Right ventricle myocardium inferior (tissue), 1 donor: ENCODE measurements at regions of chr2 and their contacts with region 1.

Region 1: DNA sequence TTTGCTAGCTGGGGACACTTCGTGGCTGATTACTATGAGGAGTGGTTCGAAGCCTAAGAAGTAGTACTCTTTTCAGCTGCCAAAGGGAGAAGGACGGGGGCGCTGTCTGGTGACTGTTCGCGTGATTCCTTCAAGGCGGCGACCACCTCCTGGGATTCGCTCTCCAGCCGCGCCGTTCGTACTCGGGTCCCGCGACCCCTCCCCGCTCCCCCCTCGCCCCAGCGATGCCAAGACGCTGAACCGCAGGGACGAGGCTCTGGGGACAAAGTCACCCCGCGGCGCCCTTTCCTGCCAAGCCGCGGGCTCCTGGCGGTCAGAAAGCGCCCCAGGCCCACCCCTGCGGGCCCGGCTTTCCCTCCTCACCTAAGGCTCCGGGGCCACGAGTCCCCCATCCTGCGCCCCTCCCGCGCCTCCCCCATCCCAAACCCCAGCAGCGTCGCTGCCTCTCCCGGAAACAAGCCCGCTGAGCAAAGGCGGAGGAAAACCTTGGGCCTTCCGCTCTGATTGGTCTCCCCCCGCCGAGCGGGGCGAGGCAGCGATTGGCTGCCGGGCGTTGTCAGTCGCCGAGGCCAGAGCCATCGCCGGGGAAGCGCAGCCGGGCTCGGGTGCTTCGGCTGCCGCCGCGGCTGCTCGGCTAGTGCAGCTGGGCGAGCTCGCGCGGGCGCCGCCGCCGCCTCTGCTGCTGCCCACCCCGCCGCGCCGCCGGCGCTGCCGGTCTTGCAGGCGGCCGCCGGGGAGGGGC is 404.3 kb downstream of the XIRP2 start:
- DNase-seq: peak; percentile 91
- ATAC-seq: peak; percentile 99

Region 2: GRCh38 chr2:167310442-167310841 is 17.8 kb after region 1 on chr2:
- intact Hi-C with region 1: loop called (anchors 2 kb)
- DNase-seq: no peak
- ATAC-seq: peak; percentile 72

Region 3: DNA sequence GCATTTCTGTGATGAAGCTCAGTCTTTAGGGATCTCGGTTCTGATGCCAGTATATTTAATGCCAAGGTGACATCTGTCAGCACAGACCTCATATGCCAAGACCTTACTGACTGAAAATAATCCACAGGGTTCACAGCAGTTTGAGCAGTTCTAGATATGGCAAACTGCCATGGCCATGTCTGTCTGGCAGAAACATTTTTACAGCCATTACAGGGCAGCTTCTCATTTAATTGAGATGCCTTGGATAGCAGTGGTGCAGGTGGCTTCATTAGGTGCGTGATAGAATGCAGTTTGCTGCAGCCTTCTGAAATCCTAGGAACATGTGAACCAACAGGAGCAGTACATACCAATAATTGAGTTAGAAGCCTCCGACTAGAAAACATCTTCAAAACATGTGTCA is 106.3 kb after region 1 on chr2:
- intact Hi-C with region 1: loop called (anchors 5 kb)
- DNase-seq: no peak
- ATAC-seq: peak; percentile 90